IMR-90 (cell line): ENCODE measurements at regions of chr12 and their contacts with region 1.

Region 1: DNA sequence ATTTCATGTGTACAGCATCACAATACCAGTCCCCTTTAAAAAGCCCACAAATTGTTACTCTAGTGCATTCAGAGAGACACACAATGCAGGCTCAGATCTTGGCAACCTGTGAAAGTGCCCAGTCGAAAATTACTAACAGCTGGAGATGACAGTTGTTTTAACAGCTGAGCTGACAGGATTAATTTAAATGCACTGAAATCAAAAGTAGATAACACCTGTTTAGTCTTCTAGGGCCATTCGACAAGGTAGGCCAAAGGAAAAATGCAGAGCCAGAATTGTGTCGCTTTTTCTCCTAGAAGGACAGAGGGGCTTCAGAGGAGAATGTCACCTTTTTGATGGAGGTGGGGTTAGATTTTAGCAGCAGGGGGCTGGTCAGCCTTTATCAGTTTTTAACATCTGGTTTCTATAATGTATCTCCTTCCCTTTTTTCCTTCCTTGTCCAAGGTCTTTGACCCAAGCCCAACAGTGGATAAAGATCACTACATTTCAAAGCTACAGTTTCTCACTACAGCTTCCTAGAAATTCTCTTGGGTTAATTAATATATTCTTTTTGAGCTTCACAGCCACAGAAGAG is 139.1 kb downstream of the SOX5 start:
- DNase-seq: no peak
- ATAC-seq: no peak
- H3K4me3 ChIP-seq: no peak overlapping the region
- H3K27ac ChIP-seq: no peak overlapping the region
- H3K4me1 ChIP-seq: no peaks in the 10 kb centered on the region
- H3K27me3 ChIP-seq: no peaks in the 10 kb centered on the region
- CTCF ChIP-seq: no peak
- POLR2A ChIP-seq: no peak
- RAD21 ChIP-seq: no peak

Region 2: DNA sequence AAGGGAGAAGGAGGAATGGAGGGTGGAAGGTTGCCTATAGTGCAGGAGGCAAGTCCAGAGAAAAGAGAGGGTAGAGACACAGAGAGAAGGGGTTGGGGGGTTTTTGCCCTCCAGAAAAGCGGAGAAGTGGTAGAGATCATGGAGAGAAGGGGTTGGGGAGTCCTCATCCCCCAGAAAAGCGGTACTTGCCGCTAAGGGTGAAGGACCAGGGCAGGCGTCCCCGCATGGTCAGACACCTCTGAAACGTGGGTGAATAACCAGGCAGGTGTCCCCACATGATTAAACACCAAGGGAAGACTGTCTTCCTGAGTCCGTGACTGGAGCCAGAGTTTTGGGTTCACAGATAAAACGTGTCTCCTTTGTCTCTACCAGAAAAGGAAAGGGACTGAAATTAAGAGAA is 299.9 kb before region 1 on chr12:
- CTCF ChIA-PET with region 1: no interaction called
- POLR2A ChIA-PET with region 1: no interaction called
- dilution Hi-C with region 1: no loop called
- in situ Hi-C with region 1: no loop called
- intact Hi-C with region 1: no loop called
- DNase-seq: no peak
- ATAC-seq: no peak
- H3K4me3 ChIP-seq: no peak overlapping the region
- H3K27ac ChIP-seq: no peak overlapping the region
- H3K4me1 ChIP-seq: no peaks in the 10 kb centered on the region
- H3K27me3 ChIP-seq: no peaks in the 10 kb centered on the region
- CTCF ChIP-seq: no peak
- POLR2A ChIP-seq: no peak
- RAD21 ChIP-seq: no peak

Region 3: GRCh38 chr12:23795494-23795893 is 14.9 kb before region 1 on chr12:
- CTCF ChIA-PET with region 1: interaction called, 11 read pairs
- POLR2A ChIA-PET with region 1: no interaction called
- dilution Hi-C with region 1: no loop called
- in situ Hi-C with region 1: no loop called
- intact Hi-C with region 1: no loop called
- DNase-seq: no peak
- ATAC-seq: no peak
- H3K4me3 ChIP-seq: no peak overlapping the region
- H3K27ac ChIP-seq: no peak overlapping the region
- H3K4me1 ChIP-seq: no peaks in the 10 kb centered on the region
- H3K27me3 ChIP-seq: no peaks in the 10 kb centered on the region
- CTCF ChIP-seq: no peak
- POLR2A ChIP-seq: no peak
- RAD21 ChIP-seq: no peak

Region 4: GRCh38 chr12:23831739-23832138 is 21.3 kb after region 1 on chr12:
- CTCF ChIA-PET with region 1: no interaction called
- POLR2A ChIA-PET with region 1: no interaction called
- dilution Hi-C with region 1: no loop called
- in situ Hi-C with region 1: no loop called
- intact Hi-C with region 1: loop called (anchors 1 kb)
- DNase-seq: no peak
- ATAC-seq: no peak
- H3K4me3 ChIP-seq: no peak overlapping the region
- H3K27ac ChIP-seq: no peak overlapping the region
- H3K4me1 ChIP-seq: no peaks in the 10 kb centered on the region
- H3K27me3 ChIP-seq: no peaks in the 10 kb centered on the region
- CTCF ChIP-seq: no peak
- POLR2A ChIP-seq: no peak
- RAD21 ChIP-seq: no peak